ENCODE measurements at regions of chr1 and their contacts with region 1.

Region 1: GRCh38 chr1:198318085-198318484 is 161.3 kb downstream of the NEK7 start:
- DNase-seq: no peak
- H3K4me3 ChIP-seq: no peak overlapping the region
- H3K27ac ChIP-seq: no peak overlapping the region
- H3K4me1 ChIP-seq: no peaks in the 10 kb centered on the region
- CTCF ChIP-seq: no peak

Region 2: GRCh38 chr1:197955486-197956394 is 362.3 kb before region 1 on chr1:
- CTCF ChIA-PET with region 1: no interaction called
- POLR2A ChIA-PET with region 1: no interaction called
- intact Hi-C with region 1: no loop called
- DNase-seq: no peak
- H3K4me3 ChIP-seq: no peak overlapping the region
- H3K27ac ChIP-seq: no peak overlapping the region
- H3K4me1 ChIP-seq: no peaks in the 10 kb centered on the region
- CTCF ChIP-seq: no peak

Region 3: DNA sequence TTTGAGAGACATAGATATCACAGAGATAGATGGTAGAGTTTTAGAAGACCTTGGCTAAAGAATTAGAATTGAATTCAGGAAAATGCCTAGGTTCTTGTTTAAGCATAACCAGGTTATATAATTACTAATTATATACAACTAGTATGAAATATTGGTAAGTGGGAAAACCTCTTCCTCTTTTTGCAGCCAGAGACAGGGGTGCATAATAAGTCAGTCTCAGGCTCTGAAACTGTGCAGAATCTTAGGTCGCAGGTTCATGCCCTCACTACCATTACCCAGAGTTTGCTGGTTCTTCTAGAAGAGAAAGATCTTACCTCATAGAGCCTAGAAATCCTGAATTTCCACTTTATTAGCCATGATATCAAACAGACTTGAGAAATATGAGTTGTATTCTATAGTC is 22.1 kb after region 1 on chr1:
- CTCF ChIA-PET with region 1: no interaction called
- POLR2A ChIA-PET with region 1: interaction called, 10 read pairs
- intact Hi-C with region 1: no loop called
- DNase-seq: no peak
- H3K4me3 ChIP-seq: no peak overlapping the region
- H3K27ac ChIP-seq: no peak overlapping the region
- H3K4me1 ChIP-seq: no peaks in the 10 kb centered on the region
- CTCF ChIP-seq: no peak

Region 4: DNA sequence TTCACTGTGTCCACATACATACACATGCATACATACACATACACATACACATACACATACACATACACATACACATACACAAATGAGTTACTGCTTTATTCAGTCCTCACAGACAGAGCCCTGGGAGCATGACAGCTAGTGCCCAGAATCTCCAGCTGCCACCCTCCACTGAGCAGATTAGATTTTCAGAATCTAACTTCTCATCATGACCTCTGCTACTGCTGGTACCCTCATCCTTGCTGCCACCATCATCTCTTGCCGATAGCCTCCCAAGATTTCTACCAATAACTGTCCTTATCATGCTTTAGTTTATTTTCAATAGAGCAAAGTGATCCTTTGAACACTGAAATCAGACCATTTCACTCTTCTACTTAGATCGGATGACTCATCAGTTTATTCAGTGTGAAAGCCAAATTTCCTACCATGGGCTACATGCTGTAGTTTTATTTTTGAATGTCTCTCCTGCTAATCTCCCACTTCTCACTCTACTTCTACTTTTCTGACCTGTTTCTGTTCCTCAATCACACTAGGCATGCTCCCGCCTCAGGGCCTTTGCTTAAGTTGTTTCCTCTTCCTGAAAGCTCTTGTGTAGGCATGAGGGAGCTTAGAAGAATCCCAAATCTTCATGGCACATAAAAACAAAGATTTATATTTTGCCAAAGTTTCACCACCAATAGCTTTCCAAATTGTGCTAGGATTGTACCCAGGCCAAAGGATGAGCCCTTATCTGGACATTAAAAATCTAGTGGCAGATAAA is 179.4 kb after region 1 on chr1:
- CTCF ChIA-PET with region 1: no interaction called
- POLR2A ChIA-PET with region 1: no interaction called
- intact Hi-C with region 1: no loop called
- DNase-seq: peak; percentile 20
- H3K4me3 ChIP-seq: no peak overlapping the region
- H3K27ac ChIP-seq: no peak overlapping the region
- H3K4me1 ChIP-seq: peaks cover 9% of the 10 kb centered on the region
- CTCF ChIP-seq: no peak

Measured in OCI-LY7 (cell line).